Activated naive CD4-positive, alpha-beta T cell treated with anti-CD3 and anti-CD28 coated beads, Interleukin-2, amount 10 ng/mL, durations not matched to agents 7 days and 5 days (primary cell): ENCODE measurements at regions of chr1 and their contacts with region 1.

Region 1: GRCh38 chr1:110780600-110781484 is 92.1 kb upstream of the CD53 start:
- DNase-seq: peak; percentile 83
- H3K4me3 Mint-ChIP-seq: no peak overlapping the region
- H3K27ac Mint-ChIP-seq: peak overlapping the region; percentile 26
- H3K4me1 Mint-ChIP-seq: peaks cover 41% of the 10 kb centered on the region
- H3K27me3 Mint-ChIP-seq: peaks cover 41% of the 10 kb centered on the region

Region 2: DNA sequence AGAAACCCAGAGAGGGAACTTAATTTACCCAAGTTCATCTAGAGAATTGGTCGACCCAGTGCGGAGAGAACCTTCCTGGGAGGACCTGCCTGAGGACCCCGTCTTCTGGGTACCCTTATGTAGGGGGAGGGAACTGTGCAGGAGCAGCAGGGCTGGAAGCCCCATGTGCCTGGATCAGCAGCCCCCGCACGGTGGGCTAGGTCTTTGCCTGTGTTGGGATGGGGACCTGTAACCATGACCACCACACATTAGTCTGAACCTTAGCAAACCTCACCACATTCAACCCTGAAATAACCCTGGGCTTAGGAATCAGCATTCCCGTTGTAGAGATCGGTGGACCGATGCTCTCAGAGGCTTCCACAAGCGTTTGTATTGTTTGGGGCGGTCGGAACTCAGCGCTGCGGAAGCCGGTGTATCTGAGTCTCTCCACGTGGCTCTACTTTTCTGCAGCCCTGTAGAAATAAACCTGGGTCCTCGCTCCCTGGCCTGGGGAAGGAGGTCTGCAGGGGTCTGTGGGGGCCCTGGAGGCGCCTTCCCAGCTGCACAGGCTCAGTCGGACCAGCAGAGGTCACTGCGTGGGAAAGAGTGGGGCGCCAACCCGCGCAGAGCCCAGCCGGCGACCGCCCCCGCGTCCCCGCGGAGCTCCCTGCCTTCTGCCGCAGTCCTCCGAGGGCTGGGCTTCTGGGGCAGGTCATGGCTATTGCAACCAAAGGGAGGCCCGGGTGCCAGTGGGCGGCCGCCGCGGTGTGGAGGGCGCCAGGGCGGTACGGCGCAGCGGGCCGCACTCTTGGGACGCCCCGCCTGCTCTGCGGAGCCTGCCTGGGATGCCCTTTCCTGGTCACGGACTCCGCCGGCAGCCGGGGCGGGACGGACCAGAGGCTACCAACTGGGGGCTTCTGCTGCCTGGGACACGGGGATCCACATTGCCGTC is 225.7 kb before region 1 on chr1:
- CTCF ChIA-PET with region 1: interaction called, 64 read pairs
- DNase-seq: peak; percentile 69
- H3K4me3 Mint-ChIP-seq: peak overlapping the region; percentile 17
- H3K27ac Mint-ChIP-seq: no peak overlapping the region
- H3K4me1 Mint-ChIP-seq: peaks cover 5% of the 10 kb centered on the region
- H3K27me3 Mint-ChIP-seq: peaks cover 93% of the 10 kb centered on the region

Region 3: DNA sequence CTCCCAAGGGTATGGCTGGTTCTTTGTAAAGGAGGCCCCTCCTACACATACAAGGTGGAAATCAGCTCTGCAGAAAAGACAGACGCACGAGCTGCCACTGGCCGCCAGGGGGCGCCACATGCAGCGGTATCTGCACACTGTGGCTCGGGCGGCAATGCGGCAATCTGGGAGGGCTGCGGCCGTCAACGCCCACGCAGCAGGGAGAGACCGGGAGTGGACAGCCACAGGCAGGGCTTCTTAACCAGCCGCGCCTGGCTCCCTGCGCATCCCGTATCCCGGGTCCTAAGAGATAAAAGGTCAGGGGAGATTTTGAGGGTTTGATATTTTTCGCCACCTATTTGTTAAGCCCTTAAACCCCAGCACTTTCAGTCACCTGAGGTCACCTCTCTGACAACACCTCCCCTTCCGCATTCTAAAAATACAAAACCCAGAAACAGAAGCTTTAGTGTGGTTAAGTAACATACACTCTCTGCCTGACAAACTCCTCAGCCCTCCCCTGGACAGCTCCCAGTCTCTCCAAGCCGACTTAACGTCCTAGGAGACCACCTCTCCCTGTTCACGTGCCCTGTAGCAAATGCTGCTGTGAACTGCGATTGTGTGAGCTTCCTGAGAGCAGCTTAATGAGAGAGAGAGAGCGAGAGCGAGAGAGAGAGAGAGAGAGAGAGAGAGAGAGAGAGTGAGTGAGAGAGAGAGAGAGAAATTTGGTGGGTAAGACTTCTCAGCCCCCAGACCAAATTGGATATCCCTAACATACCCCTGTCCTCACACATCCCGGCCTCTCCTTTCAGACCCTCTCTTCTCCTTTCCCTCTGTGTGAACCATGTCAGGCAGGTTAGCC is 161.2 kb before region 1 on chr1:
- CTCF ChIA-PET with region 1: interaction called, 185 read pairs
- DNase-seq: peak; percentile 93
- H3K4me3 Mint-ChIP-seq: peak overlapping the region; percentile 82
- H3K27ac Mint-ChIP-seq: peak overlapping the region; percentile 98
- H3K4me1 Mint-ChIP-seq: peaks cover 54% of the 10 kb centered on the region
- H3K27me3 Mint-ChIP-seq: peaks cover 8% of the 10 kb centered on the region

Region 4: DNA sequence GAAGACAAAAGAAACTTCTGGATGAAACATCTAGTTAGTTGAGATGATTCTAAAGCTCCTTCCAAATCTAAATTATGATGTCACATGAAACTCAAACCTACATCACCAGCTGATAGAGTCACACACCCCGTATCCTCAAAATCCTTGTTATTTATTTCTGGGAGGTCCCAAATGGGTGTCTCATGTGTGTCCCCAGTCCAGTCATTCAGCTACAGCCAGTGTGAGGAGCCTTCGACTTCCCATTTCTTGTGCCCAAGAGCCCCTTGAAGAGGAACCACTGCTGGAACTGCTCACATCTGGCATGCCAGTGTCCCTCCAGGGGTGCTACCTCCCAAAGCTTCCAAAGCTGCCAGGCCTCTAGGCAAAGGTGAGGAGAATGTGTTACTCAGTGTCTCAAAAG is 73.6 kb before region 1 on chr1:
- CTCF ChIA-PET with region 1: no interaction called
- DNase-seq: no peak
- H3K4me3 Mint-ChIP-seq: no peak overlapping the region
- H3K27ac Mint-ChIP-seq: no peak overlapping the region
- H3K4me1 Mint-ChIP-seq: peaks cover 11% of the 10 kb centered on the region
- H3K27me3 Mint-ChIP-seq: peaks cover 20% of the 10 kb centered on the region

Region 5: GRCh38 chr1:110829955-110830553 is 49.2 kb after region 1 on chr1:
- CTCF ChIA-PET with region 1: interaction called, 126 read pairs
- DNase-seq: peak; percentile 41
- H3K4me3 Mint-ChIP-seq: no peak overlapping the region
- H3K27ac Mint-ChIP-seq: no peak overlapping the region
- H3K4me1 Mint-ChIP-seq: peaks cover 8% of the 10 kb centered on the region
- H3K27me3 Mint-ChIP-seq: peaks cover 5% of the 10 kb centered on the region

Region 6: GRCh38 chr1:110986407-110986891 is 205.6 kb after region 1 on chr1:
- CTCF ChIA-PET with region 1: interaction called, 14 read pairs
- DNase-seq: no peak
- H3K4me3 Mint-ChIP-seq: no peak overlapping the region
- H3K27ac Mint-ChIP-seq: no peak overlapping the region
- H3K4me1 Mint-ChIP-seq: peaks cover 14% of the 10 kb centered on the region
- H3K27me3 Mint-ChIP-seq: peaks cover 4% of the 10 kb centered on the region